ENCODE measurements at regions of chr18 and their contacts with region 1.

Region 1: GRCh38 chr18:50902797-50903196 is 23.9 kb downstream of the ME2 start:
- DNase-seq: no peak
- H3K4me3 Mint-ChIP-seq: no peak overlapping the region
- H3K27ac Mint-ChIP-seq: peak overlapping the region; percentile 47
- H3K4me1 Mint-ChIP-seq: peaks cover 17% of the 10 kb centered on the region
- H3K27me3 Mint-ChIP-seq: no peaks in the 10 kb centered on the region

Region 2: GRCh38 chr18:50944245-50944932 is 41.6 kb after region 1 on chr18:
- intact Hi-C with region 1: loop called (anchors 5 kb)
- DNase-seq: no peak
- H3K4me3 Mint-ChIP-seq: no peak overlapping the region
- H3K27ac Mint-ChIP-seq: no peak overlapping the region
- H3K4me1 Mint-ChIP-seq: no peaks in the 10 kb centered on the region
- H3K27me3 Mint-ChIP-seq: no peaks in the 10 kb centered on the region